Endothelial cell of umbilical vein (primary cell): ENCODE measurements at regions of chr17 and their contacts with region 1.

Region 1: GRCh38 chr17:14300575-14301278 is at the start of gene HS3ST3B1:
- DNase-seq: peak; percentile 89
- H3K4me3 ChIP-seq: peak within 1 kb of the TSS in 1 of 3 experiments; percentile 24
- H3K27ac ChIP-seq: no peak within 1 kb of the TSS
- H3K4me1 ChIP-seq: peaks cover 23% of the 10 kb centered on the region
- H3K27me3 ChIP-seq: peaks cover 72 to 96% of the 10 kb centered on the region in 2 experiments
- CTCF ChIP-seq: no peak
- POLR2A ChIP-seq: no peak
- total RNA-seq, gene HS3ST3B1: not detected in 2 replicates

Region 2: GRCh38 chr17:13031718-13032350 is 1268.9 kb before region 1 on chr17:
- CTCF ChIA-PET with region 1: interaction called, 11 read pairs
- POLR2A ChIA-PET with region 1: no interaction called
- dilution Hi-C with region 1: no loop called
- intact Hi-C with region 1: loop called (anchors 2 kb)
- DNase-seq: peak; percentile 18
- H3K4me3 ChIP-seq: no peak overlapping the region
- H3K27ac ChIP-seq: no peak overlapping the region
- H3K4me1 ChIP-seq: no peaks in the 10 kb centered on the region
- H3K27me3 ChIP-seq: no peaks in the 10 kb centered on the region
- CTCF ChIP-seq: peak; percentile 80 to 87
- POLR2A ChIP-seq: no peak

Region 3: DNA sequence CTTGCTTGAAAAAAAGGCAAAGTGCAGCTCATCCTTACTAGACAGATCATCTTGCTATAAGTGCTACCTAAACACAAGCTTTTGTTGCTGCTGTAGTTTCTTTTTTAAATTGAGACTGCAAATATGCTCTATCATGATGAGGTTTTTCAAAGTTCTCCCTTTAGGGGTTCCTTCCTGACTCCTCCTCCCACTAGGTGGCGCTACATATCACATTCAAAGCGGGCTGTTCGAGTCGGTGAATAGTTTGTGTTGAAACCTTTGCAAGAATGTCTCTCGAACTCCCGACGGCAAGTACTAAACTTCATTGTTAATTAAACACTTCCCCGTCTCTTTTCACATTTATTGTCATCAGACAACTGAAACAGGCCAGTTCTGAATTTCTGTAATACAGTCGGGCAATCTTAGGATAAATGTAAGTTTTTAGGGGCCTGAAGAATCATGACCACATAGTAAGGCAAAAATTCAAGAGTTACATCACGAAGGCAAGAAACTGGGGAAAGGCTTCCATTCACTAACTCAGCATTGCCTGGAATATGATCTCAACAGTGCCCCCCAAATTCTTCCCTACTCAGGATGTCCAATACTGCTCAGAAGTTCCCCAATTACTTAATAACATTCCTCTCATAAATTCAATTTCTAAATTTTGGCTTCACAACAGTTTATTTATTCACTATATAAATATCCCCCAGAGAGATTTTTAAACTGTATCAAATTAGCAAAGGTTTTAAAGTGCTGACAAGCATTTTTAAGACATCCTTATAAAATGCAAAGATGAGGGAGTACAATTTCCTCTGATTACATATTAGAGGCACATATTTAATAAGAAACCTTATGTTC is 705.7 kb before region 1 on chr17:
- CTCF ChIA-PET with region 1: interaction called, 66 read pairs
- POLR2A ChIA-PET with region 1: no interaction called
- dilution Hi-C with region 1: no loop called
- intact Hi-C with region 1: loop called (anchors 1 kb)
- DNase-seq: peak; percentile 58
- H3K4me3 ChIP-seq: no peak overlapping the region
- H3K27ac ChIP-seq: no peak overlapping the region
- H3K4me1 ChIP-seq: no peaks in the 10 kb centered on the region
- H3K27me3 ChIP-seq: peaks cover 3 to 6% of the 10 kb centered on the region in 2 experiments
- CTCF ChIP-seq: peak; percentile 75 to 78
- POLR2A ChIP-seq: no peak

Region 4: GRCh38 chr17:14061666-14062560 is 238.8 kb before region 1 on chr17:
- CTCF ChIA-PET with region 1: interaction called, 5 read pairs
- POLR2A ChIA-PET with region 1: no interaction called
- dilution Hi-C with region 1: no loop called
- intact Hi-C with region 1: loop called (anchors 2 kb)
- DNase-seq: peak; percentile 69
- H3K4me3 ChIP-seq: peak overlapping the region in 1 of 3 experiments; percentile 36
- H3K27ac ChIP-seq: peak overlapping the region; percentile 61
- H3K4me1 ChIP-seq: peaks cover 24% of the 10 kb centered on the region
- H3K27me3 ChIP-seq: no peaks in the 10 kb centered on the region
- CTCF ChIP-seq: no peak
- POLR2A ChIP-seq: no peak

Region 5: DNA sequence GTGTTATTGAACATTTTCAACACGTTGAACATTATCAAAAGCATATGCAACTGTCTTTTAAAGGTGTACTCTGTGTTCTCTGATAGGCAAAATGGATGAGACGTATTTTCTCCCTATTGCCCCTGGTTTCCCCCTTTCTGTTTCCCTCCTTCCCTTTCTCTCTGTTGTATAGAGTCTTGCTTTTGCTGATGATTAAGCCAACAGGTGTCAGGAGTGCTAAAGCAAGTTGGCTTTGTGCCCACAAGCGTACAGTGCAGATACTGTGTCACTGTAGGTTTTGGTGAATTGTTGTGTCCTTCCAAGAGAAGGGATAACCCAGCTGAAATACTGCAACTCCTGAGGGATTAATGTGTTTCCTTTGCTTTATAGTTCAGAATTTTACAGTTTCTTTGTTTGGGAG is 157.0 kb before region 1 on chr17:
- CTCF ChIA-PET with region 1: no interaction called
- POLR2A ChIA-PET with region 1: no interaction called
- dilution Hi-C with region 1: no loop called
- intact Hi-C with region 1: no loop called
- DNase-seq: no peak
- H3K4me3 ChIP-seq: no peak overlapping the region
- H3K27ac ChIP-seq: no peak overlapping the region
- H3K4me1 ChIP-seq: no peaks in the 10 kb centered on the region
- H3K27me3 ChIP-seq: no peaks in the 10 kb centered on the region
- CTCF ChIP-seq: no peak
- POLR2A ChIP-seq: no peak

Region 6: DNA sequence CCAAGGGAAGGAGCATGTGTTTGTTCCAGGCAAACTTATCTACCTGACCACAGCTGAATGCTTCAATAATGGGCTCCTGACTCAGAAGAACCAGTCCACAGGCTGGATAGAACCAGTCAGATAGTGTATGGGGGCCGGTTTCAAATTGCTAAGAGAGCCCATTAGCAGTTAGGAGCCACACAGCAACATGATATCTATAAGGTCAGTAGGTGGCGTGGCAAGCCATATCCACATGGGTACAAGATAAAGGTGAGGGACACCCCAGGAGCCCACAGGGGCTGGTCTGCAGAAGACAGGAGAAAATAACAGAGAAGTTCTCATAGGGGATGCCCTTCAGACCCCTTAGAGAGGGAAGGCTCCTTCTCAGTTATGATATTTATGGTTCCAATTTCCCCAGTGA is 32.5 kb before region 1 on chr17:
- CTCF ChIA-PET with region 1: no interaction called
- POLR2A ChIA-PET with region 1: no interaction called
- dilution Hi-C with region 1: no loop called
- intact Hi-C with region 1: no loop called
- DNase-seq: no peak
- H3K4me3 ChIP-seq: no peak overlapping the region
- H3K27ac ChIP-seq: no peak overlapping the region
- H3K4me1 ChIP-seq: no peaks in the 10 kb centered on the region
- H3K27me3 ChIP-seq: no peaks in the 10 kb centered on the region
- CTCF ChIP-seq: no peak
- POLR2A ChIP-seq: no peak

Region 7: GRCh38 chr17:14461227-14461548 is 160.5 kb after region 1 on chr17:
- CTCF ChIA-PET with region 1: no interaction called
- POLR2A ChIA-PET with region 1: no interaction called
- dilution Hi-C with region 1: no loop called
- intact Hi-C with region 1: no loop called
- DNase-seq: no peak
- H3K4me3 ChIP-seq: no peak overlapping the region
- H3K27ac ChIP-seq: no peak overlapping the region
- H3K4me1 ChIP-seq: no peaks in the 10 kb centered on the region
- H3K27me3 ChIP-seq: no peaks in the 10 kb centered on the region
- CTCF ChIP-seq: no peak
- POLR2A ChIP-seq: no peak

Region 8: GRCh38 chr17:14926526-14927122 is 625.9 kb after region 1 on chr17:
- CTCF ChIA-PET with region 1: no interaction called
- POLR2A ChIA-PET with region 1: no interaction called
- dilution Hi-C with region 1: no loop called
- intact Hi-C with region 1: loop called (anchors 10 kb)
- DNase-seq: peak; percentile 38
- H3K4me3 ChIP-seq: no peak overlapping the region
- H3K27ac ChIP-seq: no peak overlapping the region
- H3K4me1 ChIP-seq: no peaks in the 10 kb centered on the region
- H3K27me3 ChIP-seq: no peaks in the 10 kb centered on the region
- CTCF ChIP-seq: peak; percentile 50 to 69
- POLR2A ChIP-seq: no peak